ENCODE measurements at regions of chr12 and their contacts with region 1.

Region 1: GRCh38 chr12:10771132-10771733 is 31.2 kb downstream of the TAS2R7 start:
- DNase-seq: no peak
- H3K4me3 ChIP-seq: no peak overlapping the region
- H3K27ac ChIP-seq: no peak overlapping the region
- H3K4me1 ChIP-seq: no peaks in the 10 kb centered on the region
- H3K27me3 ChIP-seq: peaks cover 90% of the 10 kb centered on the region
- CTCF ChIP-seq: peak; percentile 80

Region 2: DNA sequence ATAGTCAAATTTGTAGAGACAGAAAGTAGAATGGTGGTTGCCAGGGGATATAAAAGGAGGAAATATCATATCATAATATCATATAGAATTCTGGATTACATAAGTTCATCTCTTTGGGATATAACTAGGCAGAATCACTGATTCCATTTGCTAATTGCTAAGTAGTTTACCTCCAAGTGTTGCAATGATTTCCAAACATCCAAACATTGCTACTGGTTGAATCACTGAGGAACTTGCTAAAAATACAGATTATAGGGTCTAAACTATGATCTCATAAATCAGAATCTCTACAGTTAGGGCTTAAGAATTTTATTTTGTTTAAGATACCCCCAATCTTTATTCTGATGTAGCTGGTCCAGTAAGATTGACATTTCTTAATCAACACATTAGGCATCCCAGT is 431.6 kb after region 1 on chr12:
- intact Hi-C with region 1: loop called (anchors 5 kb)
- DNase-seq: no peak
- H3K4me3 ChIP-seq: no peak overlapping the region
- H3K27ac ChIP-seq: no peak overlapping the region
- H3K4me1 ChIP-seq: no peaks in the 10 kb centered on the region
- H3K27me3 ChIP-seq: no peaks in the 10 kb centered on the region
- CTCF ChIP-seq: no peak

Region 3: GRCh38 chr12:11486623-11487444 is 715.6 kb after region 1 on chr12:
- intact Hi-C with region 1: loop called (anchors 5 kb)
- DNase-seq: peak; percentile 52
- H3K4me3 ChIP-seq: no peak overlapping the region
- H3K27ac ChIP-seq: no peak overlapping the region
- H3K4me1 ChIP-seq: no peaks in the 10 kb centered on the region
- H3K27me3 ChIP-seq: peaks cover 58% of the 10 kb centered on the region
- CTCF ChIP-seq: peak; percentile 98